Panc1 (cell line): ENCODE measurements at regions of chr2 and their contacts with region 1.

Region 1: GRCh38 chr2:55213822-55214221 is 18.3 kb downstream of the CLHC1 start:
- DNase-seq: no peak
- ATAC-seq: no peak
- H3K4me3 ChIP-seq: no peak overlapping the region
- H3K27ac ChIP-seq: no peak overlapping the region
- H3K4me1 ChIP-seq: no peaks in the 10 kb centered on the region
- H3K27me3 ChIP-seq: no peaks in the 10 kb centered on the region
- CTCF ChIP-seq: no peak

Region 2: DNA sequence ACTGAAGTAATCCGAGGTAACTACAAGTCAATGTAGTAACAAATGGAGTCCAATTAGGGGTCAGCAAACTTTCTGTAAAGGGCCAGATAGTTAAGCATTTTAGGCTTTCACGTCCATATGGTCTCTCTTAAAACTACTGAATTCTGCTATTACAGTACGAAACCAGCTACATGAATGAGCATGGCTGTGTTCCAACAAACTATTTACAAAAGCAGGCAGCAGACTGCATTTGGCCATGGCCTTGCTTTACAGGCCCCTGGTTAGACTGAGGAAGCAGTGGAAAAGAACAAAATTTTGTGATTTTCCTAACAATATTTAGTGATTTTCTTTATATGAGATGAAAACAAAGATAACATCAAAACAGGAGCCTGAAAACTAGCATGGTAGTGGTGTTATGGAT is 227.6 kb before region 1 on chr2:
- CTCF ChIA-PET with region 1: no interaction called
- POLR2A ChIA-PET with region 1: interaction called, 10 read pairs
- in situ Hi-C with region 1: no loop called
- intact Hi-C with region 1: no loop called
- DNase-seq: no peak
- ATAC-seq: no peak
- H3K4me3 ChIP-seq: no peak overlapping the region
- H3K27ac ChIP-seq: peak overlapping the region; percentile 60
- H3K4me1 ChIP-seq: peaks cover 78% of the 10 kb centered on the region
- H3K27me3 ChIP-seq: no peaks in the 10 kb centered on the region
- CTCF ChIP-seq: no peak